H1 (cell line): ENCODE measurements at regions of chr5 and their contacts with region 1.

Region 1: GRCh38 chr5:170747851-170748250 is 35.7 kb upstream of the GABRP start:
- DNase-seq: peak in 1 of 2 experiments; percentile 77
- H3K4me3 ChIP-seq: no peak overlapping the region
- H3K27ac ChIP-seq: no peak overlapping the region
- H3K4me1 ChIP-seq: peaks cover 4 to 23% (median 15%) of the 10 kb centered on the region in 4 experiments
- H3K27me3 ChIP-seq: no peaks in the 10 kb centered on the region
- CTCF ChIP-seq: peak in 2 of 3 experiments; percentile 72 to 82; a peak in 3 of 4 replicates
- EP300 ChIP-seq: no peak
- POLR2A ChIP-seq: no peak
- RAD21 ChIP-seq: peak; percentile 51 to 68

Region 2: DNA sequence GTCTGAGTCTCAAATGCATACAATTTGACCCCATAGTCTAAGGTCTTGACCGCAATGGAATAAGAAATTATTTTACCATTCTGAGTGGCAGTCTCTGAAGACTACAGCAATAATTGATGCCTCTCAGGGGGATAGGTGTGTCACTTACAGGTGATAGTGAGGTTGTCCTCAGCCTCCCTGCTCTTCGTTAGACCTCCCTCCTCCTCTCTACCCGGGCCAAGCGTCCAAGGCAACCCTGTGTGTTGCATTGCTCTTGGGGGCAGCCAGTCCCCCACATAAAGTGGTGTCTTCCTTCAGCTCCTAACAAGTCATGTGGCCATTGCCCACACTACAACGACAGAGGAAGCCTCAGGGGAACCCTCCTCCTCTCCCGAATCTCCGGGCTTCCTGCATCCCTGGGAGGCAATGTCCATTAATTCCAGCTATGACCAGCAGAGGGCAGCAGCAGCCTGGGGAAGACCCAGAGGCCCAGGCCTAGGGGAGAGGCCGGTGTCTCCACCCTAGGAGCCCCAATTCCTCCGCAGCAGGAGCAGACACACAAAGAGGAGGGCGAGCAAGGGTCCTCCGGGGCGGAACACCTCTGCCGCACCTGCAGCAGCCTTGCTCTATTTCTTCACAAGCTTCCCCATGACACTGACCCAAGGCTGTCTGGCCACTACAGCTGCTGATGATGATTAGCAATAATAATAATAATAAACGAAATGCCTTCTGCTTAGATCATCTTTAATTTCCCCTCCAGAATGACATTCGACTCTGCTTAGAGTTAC is 109.2 kb before region 1 on chr5:
- CTCF ChIA-PET with region 1: interaction called, 55 read pairs
- POLR2A ChIA-PET with region 1: interaction called, 3 read pairs
- DNase-seq: peak; percentile 70 to 99
- H3K4me3 ChIP-seq: no peak overlapping the region
- H3K27ac ChIP-seq: no peak overlapping the region
- H3K4me1 ChIP-seq: peaks cover 10 to 13% (median 12%) of the 10 kb centered on the region in 4 experiments; a peak in 6 of 7 replicates
- H3K27me3 ChIP-seq: no peaks in the 10 kb centered on the region
- CTCF ChIP-seq: peak in 2 of 3 experiments; percentile 90 to 93; a peak in 3 of 4 replicates
- EP300 ChIP-seq: no peak
- POLR2A ChIP-seq: no peak
- RAD21 ChIP-seq: peak; percentile 97 to 99

Region 3: DNA sequence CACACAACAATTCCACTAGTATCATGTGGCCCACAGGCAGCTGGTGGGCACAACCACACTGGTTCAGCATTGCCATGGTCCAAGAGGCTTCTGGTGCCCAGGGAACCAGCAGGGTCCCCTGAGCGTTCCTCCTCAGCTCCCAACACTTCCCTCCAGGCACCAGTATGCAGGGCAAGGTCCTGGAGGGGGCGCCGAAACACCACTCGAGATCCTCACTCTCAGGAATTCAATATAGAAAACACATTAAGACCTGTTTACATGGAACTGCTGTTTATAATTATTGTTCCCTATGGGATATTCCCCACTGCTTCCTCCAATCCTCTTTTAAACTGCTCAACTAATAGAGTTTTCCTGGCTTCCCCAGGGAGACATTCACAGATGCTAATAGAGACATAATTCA is 56.2 kb before region 1 on chr5:
- CTCF ChIA-PET with region 1: interaction called, 33 read pairs
- POLR2A ChIA-PET with region 1: interaction called, 4 read pairs
- DNase-seq: peak in 1 of 2 experiments; percentile 75
- H3K4me3 ChIP-seq: no peak overlapping the region
- H3K27ac ChIP-seq: no peak overlapping the region
- H3K4me1 ChIP-seq: no peaks in the 10 kb centered on the region
- H3K27me3 ChIP-seq: no peaks in the 10 kb centered on the region
- CTCF ChIP-seq: peak; percentile 76 to 82 (median 77)
- EP300 ChIP-seq: no peak
- POLR2A ChIP-seq: no peak
- RAD21 ChIP-seq: peak; percentile 88 to 91

Region 4: DNA sequence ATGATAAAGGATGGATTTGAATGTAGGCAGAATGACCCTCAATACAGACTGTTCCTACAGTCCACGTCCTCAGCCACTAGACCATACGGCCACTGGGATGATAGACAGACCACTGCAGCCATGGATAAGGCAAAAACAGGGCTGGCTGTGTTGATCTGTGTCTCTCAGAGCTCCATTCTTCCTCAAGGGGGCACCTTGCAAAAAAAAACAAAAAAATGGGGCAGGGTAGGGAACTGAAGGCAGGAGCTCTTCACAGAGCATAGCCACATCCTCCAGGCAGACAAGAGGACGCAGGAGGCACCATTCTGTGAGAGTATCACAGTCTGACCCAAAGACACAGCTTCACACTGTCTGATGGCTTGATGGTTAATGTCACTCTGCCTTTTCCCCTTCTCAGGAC is 25.5 kb before region 1 on chr5:
- CTCF ChIA-PET with region 1: interaction called, 18 read pairs
- POLR2A ChIA-PET with region 1: no interaction called
- DNase-seq: no peak
- H3K4me3 ChIP-seq: no peak overlapping the region
- H3K27ac ChIP-seq: no peak overlapping the region
- H3K4me1 ChIP-seq: no peaks in the 10 kb centered on the region
- H3K27me3 ChIP-seq: no peaks in the 10 kb centered on the region
- CTCF ChIP-seq: peak in 1 of 3 experiments; percentile 22; a peak in 2 of 4 replicates
- EP300 ChIP-seq: no peak
- POLR2A ChIP-seq: no peak
- RAD21 ChIP-seq: no peak; a peak in 1 of 4 replicates

Region 5: DNA sequence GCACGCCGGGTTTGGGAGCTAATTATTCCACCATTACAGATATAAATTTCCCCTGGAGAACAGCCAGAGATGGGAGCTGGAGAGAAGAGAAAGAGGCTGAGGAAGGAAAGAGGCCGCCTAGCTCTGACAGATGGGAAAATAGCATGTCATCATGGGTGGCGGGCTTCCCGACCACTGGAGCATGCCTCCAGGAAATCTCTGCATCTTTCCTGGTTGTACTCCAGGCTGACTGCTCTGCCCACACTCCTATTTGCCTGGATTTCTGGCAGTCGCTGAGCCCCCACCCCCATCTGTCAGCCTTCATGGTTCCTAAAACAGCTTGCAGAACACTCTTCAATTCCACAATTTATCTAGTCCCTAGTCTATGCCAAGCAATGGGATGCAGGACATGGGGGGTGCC is 21.4 kb after region 1 on chr5:
- CTCF ChIA-PET with region 1: interaction called, 151 read pairs
- POLR2A ChIA-PET with region 1: interaction called, 33 read pairs
- DNase-seq: no peak
- H3K4me3 ChIP-seq: no peak overlapping the region
- H3K27ac ChIP-seq: no peak overlapping the region
- H3K4me1 ChIP-seq: peaks cover 4 to 16% (median 11%) of the 10 kb centered on the region in 4 experiments
- H3K27me3 ChIP-seq: no peaks in the 10 kb centered on the region; a peak in 1 of 7 replicates
- CTCF ChIP-seq: no peak
- EP300 ChIP-seq: no peak
- POLR2A ChIP-seq: no peak
- RAD21 ChIP-seq: no peak

Region 6: GRCh38 chr5:170774836-170775235 is 27.0 kb after region 1 on chr5:
- CTCF ChIA-PET with region 1: interaction called, 151 read pairs
- POLR2A ChIA-PET with region 1: interaction called, 33 read pairs
- DNase-seq: no peak
- H3K4me3 ChIP-seq: no peak overlapping the region
- H3K27ac ChIP-seq: no peak overlapping the region
- H3K4me1 ChIP-seq: peaks cover 4 to 15% (median 8%) of the 10 kb centered on the region in 4 experiments
- H3K27me3 ChIP-seq: no peaks in the 10 kb centered on the region
- CTCF ChIP-seq: peak in 1 of 3 experiments; percentile 19; a peak in 2 of 4 replicates
- EP300 ChIP-seq: no peak
- POLR2A ChIP-seq: no peak
- RAD21 ChIP-seq: peak in 1 of 2 experiments; percentile 38; a peak in 1 of 4 replicates

Region 7: DNA sequence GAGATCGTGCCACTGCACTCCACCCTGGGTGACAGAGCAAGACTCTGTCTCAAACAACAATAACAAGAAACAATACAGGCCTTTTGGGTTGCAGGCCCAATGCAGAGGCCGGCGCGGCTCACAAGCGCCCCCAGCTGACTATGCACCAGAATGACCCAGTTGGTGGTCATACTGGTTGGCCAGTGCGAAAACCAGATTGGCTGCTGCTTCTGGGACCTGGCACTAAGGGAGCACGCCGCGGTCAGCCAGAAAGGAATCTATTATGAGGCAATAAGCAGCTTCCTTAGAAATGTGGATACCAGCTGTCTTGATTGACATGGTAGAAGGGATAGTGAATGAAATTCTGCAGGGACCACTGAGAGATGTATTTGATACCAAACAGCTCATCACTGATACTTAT is 148.9 kb after region 1 on chr5:
- CTCF ChIA-PET with region 1: interaction called, 6 read pairs
- POLR2A ChIA-PET with region 1: interaction called, 10 read pairs
- DNase-seq: peak; percentile 49 to 88
- H3K4me3 ChIP-seq: no peak overlapping the region
- H3K27ac ChIP-seq: no peak overlapping the region
- H3K4me1 ChIP-seq: no peaks in the 10 kb centered on the region; a peak in 1 of 7 replicates
- H3K27me3 ChIP-seq: no peaks in the 10 kb centered on the region
- CTCF ChIP-seq: peak; percentile 83 to 89 (median 86)
- EP300 ChIP-seq: no peak
- POLR2A ChIP-seq: no peak
- RAD21 ChIP-seq: peak; percentile 82 to 83